ENCODE measurements at regions of chr7 and their contacts with region 1.

Region 1: GRCh38 chr7:152463709-152464311 is 28.0 kb upstream of the KMT2C start:
- DNase-seq: peak; percentile 100
- ATAC-seq: peak; percentile 89 to 93
- H3K4me3 ChIP-seq: peak overlapping the region; percentile 84 to 99 (median 88)
- H3K27ac ChIP-seq: peak overlapping the region; percentile 92 to 100 (median 99)
- H3K4me1 ChIP-seq: peaks cover 11 to 13% of the 10 kb centered on the region in 2 donors
- H3K27me3 ChIP-seq: no peaks in the 10 kb centered on the region
- CTCF ChIP-seq: no peak
- POLR2A ChIP-seq: peak; percentile 94 to 97

Region 2: GRCh38 chr7:151057989-151058780 is 1405.6 kb before region 1 on chr7:
- in situ Hi-C with region 1: no loop called
- intact Hi-C with region 1: no loop called
- DNase-seq: peak; percentile 100
- ATAC-seq: peak; percentile 85 to 87
- H3K4me3 ChIP-seq: peak overlapping the region; percentile 71 to 92 (median 86)
- H3K27ac ChIP-seq: peak overlapping the region; percentile 93 to 99 (median 98)
- H3K4me1 ChIP-seq: peaks cover 22 to 44% of the 10 kb centered on the region in 2 donors
- H3K27me3 ChIP-seq: no peaks in the 10 kb centered on the region
- CTCF ChIP-seq: no peak
- POLR2A ChIP-seq: peak; percentile 84 to 99

Region 3: DNA sequence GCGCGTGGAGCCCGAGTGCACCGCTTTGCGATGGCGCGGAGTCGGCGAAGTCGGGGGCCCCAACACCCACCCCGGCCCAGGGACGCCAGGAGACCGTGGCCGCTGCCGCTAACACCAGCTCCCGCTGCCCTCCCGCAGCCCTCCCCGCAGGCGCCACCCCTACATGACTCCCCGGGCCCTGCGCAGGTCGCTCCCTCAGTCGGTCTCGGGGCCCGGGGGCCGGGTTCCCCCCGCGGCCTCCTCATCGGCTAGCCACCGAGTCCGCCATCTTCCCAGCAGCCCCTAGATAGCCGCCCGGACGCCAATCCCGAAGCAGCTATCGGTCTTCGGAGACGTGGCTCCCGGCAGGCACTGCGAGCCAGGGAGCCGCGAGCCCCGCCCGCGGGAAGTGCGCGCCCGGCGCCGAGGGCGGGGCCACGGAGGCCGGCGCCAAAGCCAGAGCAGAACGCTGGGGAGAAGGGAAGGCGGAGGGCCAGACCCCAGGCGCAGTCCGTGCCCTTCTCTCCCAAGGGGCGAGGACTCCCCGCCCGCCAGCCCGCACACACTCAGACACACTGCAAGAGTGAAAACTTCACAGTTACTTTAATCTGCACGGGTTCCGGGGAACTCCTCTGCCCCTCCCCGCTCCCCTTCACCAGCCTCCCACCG is 1383.2 kb before region 1 on chr7 and contains the start of gene FASTK:
- in situ Hi-C with region 1: no loop called
- intact Hi-C with region 1: loop called (anchors 10 kb)
- DNase-seq: peak; percentile 87 to 90
- ATAC-seq: peak; percentile 77 to 85
- H3K4me3 ChIP-seq: peak within 1 kb of the TSS; percentile 96 to 99 (median 98)
- H3K27ac ChIP-seq: peak within 1 kb of the TSS; percentile 90 to 99 (median 94)
- H3K4me1 ChIP-seq: peaks cover 34 to 47% of the 10 kb centered on the region in 2 donors
- H3K27me3 ChIP-seq: no peaks in the 10 kb centered on the region
- CTCF ChIP-seq: no peak
- POLR2A ChIP-seq: peak; percentile 70 to 79
- total RNA-seq, gene FASTK: 108 to 181 (median 141) TPM

Region 4: DNA sequence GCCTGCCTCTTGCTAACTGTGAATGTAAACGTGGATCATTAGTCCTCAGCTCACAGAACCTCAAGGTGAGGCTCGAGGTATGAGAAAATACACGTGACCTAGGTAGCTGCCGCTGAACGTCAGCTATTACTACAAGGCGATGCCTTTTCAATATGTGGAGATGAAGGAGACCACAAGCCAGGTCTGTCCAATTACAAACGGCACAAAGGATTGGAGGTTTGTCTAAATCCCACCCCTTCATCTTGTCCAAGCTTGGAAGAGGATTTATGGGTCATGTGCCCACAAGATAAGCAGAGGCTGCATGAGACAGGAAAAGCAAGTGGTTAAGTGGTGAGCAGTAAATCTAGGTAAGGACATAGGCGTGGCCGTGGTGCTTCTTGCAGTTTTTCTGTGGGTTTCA is 1256.9 kb before region 1 on chr7:
- in situ Hi-C with region 1: no loop called
- intact Hi-C with region 1: no loop called
- DNase-seq: no peak
- ATAC-seq: no peak
- H3K4me3 ChIP-seq: no peak overlapping the region
- H3K27ac ChIP-seq: no peak overlapping the region
- H3K4me1 ChIP-seq: no peaks in the 10 kb centered on the region
- H3K27me3 ChIP-seq: peaks cover 7 to 26% (median 17%) of the 10 kb centered on the region in 3 donors
- CTCF ChIP-seq: no peak
- POLR2A ChIP-seq: no peak

Region 5: GRCh38 chr7:152336754-152337368 is 126.9 kb before region 1 on chr7:
- in situ Hi-C with region 1: no loop called
- intact Hi-C with region 1: loop called (anchors 1 kb)
- DNase-seq: peak in 1 of 2 donors; percentile 26
- ATAC-seq: peak; percentile 76 to 80
- H3K4me3 ChIP-seq: peak overlapping the region in 1 of 4 donors; percentile 34
- H3K27ac ChIP-seq: no peak overlapping the region
- H3K4me1 ChIP-seq: peaks cover 49 to 51% of the 10 kb centered on the region in 2 donors
- H3K27me3 ChIP-seq: no peaks in the 10 kb centered on the region
- CTCF ChIP-seq: peak; percentile 29 to 59 (median 56)
- POLR2A ChIP-seq: no peak

Region 6: DNA sequence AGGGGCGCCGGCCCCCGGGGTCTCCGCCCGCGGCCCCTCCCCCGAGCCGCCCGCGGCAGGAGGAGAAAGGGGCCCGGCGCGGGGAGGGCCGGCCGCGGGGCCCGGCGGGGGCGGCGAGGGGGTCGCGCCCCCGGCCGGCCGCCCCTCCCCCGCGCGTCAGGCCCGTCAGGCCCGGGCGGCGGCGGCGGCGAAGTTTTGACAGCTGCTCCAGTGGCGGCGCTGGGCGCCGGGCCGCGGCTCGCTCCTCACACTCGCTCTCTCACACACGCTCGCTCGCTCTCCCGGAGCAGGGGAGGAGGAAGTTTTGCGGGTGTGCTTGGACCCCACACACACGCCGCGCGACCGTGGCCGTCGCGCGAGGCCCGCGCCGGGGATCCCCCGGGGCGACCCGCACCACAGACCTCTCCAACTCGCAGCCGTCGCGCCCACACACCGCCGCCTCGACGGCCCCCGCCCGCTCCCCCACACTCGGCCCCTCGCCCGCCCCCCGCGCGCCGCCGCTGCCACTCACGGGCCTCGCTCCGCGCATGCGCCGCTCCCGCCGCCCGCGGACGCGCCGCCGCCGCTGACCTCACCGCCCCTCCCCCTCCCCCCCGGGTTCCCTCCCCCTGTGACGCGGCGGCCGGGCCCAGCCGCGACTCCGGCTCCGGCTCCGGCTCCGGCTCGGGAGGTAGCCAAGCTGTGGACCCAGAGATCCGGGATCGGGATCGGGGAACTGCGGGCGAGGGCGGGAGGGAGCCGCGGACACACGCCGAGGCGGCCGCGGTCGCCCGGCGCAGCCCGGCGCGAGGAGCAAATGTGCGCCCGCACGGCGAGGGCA is 27.5 kb before region 1 on chr7:
- in situ Hi-C with region 1: no loop called
- intact Hi-C with region 1: loop called (anchors 1 kb)
- DNase-seq: peak; percentile 90 to 94
- ATAC-seq: peak; percentile 66 to 70
- H3K4me3 ChIP-seq: peak overlapping the region; percentile 60 to 99 (median 82)
- H3K27ac ChIP-seq: peak overlapping the region; percentile 92 to 100 (median 99)
- H3K4me1 ChIP-seq: peaks cover 24 to 40% of the 10 kb centered on the region in 2 donors
- H3K27me3 ChIP-seq: no peaks in the 10 kb centered on the region
- CTCF ChIP-seq: no peak
- POLR2A ChIP-seq: peak; percentile 57 to 59

Region 7: GRCh38 chr7:152675759-152676636 is 212.2 kb after region 1 on chr7 and contains the start of gene XRCC2:
- in situ Hi-C with region 1: no loop called
- intact Hi-C with region 1: loop called (anchors 5 kb)
- DNase-seq: peak; percentile 81 to 86
- ATAC-seq: peak; percentile 99
- H3K4me3 ChIP-seq: peak within 1 kb of the TSS; percentile 67 to 78 (median 70)
- H3K27ac ChIP-seq: peak within 1 kb of the TSS; percentile 85 to 87 (median 86)
- H3K4me1 ChIP-seq: peaks cover 7 to 12% of the 10 kb centered on the region in 2 donors
- H3K27me3 ChIP-seq: no peaks in the 10 kb centered on the region
- CTCF ChIP-seq: no peak
- POLR2A ChIP-seq: peak; percentile 56 to 68
- total RNA-seq, gene XRCC2: 0.07 to 0.41 (median 0.20) TPM in 3 of 4 donors, not detected in the other

Region 8: GRCh38 chr7:152709287-152710152 is 245.7 kb after region 1 on chr7:
- in situ Hi-C with region 1: no loop called
- intact Hi-C with region 1: loop called (anchors 10 kb)
- DNase-seq: no peak
- ATAC-seq: no peak
- H3K4me3 ChIP-seq: no peak overlapping the region
- H3K27ac ChIP-seq: no peak overlapping the region
- H3K4me1 ChIP-seq: peaks cover 3 to 5% of the 10 kb centered on the region in 2 donors
- H3K27me3 ChIP-seq: no peaks in the 10 kb centered on the region
- CTCF ChIP-seq: no peak
- POLR2A ChIP-seq: no peak

Region 9: GRCh38 chr7:152759949-152760853 is 296.4 kb after region 1 on chr7:
- in situ Hi-C with region 1: no loop called
- intact Hi-C with region 1: loop called (anchors 1 kb)
- DNase-seq: peak; percentile 10 to 34
- ATAC-seq: peak; percentile 59 to 69
- H3K4me3 ChIP-seq: peak overlapping the region; percentile 79 to 96 (median 86)
- H3K27ac ChIP-seq: peak overlapping the region; percentile 94 to 100 (median 98)
- H3K4me1 ChIP-seq: peaks cover 23 to 25% of the 10 kb centered on the region in 2 donors
- H3K27me3 ChIP-seq: no peaks in the 10 kb centered on the region
- CTCF ChIP-seq: no peak
- POLR2A ChIP-seq: peak in 1 of 2 donors; percentile 41

Measured in gastrocnemius medialis (tissue), 4 donors.